ENCODE measurements at regions of chr9 and their contacts with region 1.

Region 1: GRCh38 chr9:132551556-132551955 is 30.9 kb upstream of the BARHL1 start:
- DNase-seq: no peak
- H3K4me3 ChIP-seq: no peak overlapping the region
- H3K27ac ChIP-seq: no peak overlapping the region
- H3K4me1 ChIP-seq: no peaks in the 10 kb centered on the region
- H3K27me3 ChIP-seq: peaks cover 0 to 13% of the 10 kb centered on the region in 2 donors
- CTCF ChIP-seq: no peak
- POLR2A ChIP-seq: no peak

Region 2: DNA sequence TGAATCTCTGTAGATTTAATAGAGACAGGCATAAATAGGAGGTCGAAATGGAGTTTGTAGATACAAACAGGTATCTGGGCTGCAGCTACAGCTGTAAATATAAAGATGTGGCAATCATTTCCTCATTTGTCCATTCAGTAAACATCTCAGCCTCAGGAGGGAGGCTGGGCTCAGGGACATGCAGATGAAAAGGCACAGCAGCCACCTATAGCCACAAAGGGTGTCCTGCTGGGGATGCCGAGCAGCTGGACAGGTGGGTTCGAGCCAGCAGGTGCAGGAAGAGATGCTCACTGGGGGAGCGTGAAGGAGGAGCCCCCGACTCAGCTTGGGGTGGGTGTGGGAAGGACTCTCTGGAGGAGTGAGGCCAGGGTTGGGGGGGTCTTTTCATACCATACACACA is 763.2 kb before region 1 on chr9:
- intact Hi-C with region 1: loop called (anchors 5 kb)
- DNase-seq: no peak
- H3K4me3 ChIP-seq: no peak overlapping the region
- H3K27ac ChIP-seq: no peak overlapping the region
- H3K4me1 ChIP-seq: no peaks in the 10 kb centered on the region
- H3K27me3 ChIP-seq: peaks cover 0 to 60% of the 10 kb centered on the region in 2 donors
- CTCF ChIP-seq: no peak
- POLR2A ChIP-seq: no peak

Region 3: DNA sequence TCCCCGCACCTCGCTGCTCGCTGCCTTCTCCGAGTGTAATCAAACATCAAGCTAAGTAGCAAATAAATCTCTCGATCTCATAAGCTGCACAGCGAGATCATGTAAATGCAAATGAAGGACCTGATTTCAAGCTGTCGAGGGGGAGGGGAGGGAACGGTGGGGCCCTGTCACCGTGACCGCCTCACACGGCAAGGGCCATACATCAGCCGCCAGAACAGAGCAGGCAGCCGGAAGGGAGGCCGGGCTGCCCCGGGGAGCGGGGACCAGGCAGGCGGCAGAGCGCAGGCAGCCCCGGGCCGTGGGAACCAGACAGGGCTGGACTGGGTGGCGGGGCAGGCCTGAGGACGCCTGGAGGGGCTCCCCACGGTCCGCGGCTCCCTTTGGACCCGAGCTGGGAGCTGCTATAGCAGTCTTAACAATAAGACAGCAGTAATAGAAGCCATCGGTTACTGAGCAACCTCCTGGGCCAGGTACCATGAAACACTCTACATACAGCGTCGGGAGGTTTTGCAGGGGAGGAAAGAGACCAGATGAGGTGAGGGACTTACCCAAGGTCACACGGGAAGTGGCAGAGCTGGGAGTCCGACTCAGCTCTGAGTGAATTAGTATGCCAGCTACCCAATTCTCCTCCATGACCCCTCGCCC is 64.7 kb before region 1 on chr9:
- intact Hi-C with region 1: loop called (anchors 2 kb)
- DNase-seq: no peak
- H3K4me3 ChIP-seq: no peak overlapping the region
- H3K27ac ChIP-seq: no peak overlapping the region
- H3K4me1 ChIP-seq: no peaks in the 10 kb centered on the region
- H3K27me3 ChIP-seq: peaks cover 0 to 53% of the 10 kb centered on the region in 2 donors
- CTCF ChIP-seq: no peak
- POLR2A ChIP-seq: no peak

Measured in breast epithelium (tissue), 4 donors.